ENCODE measurements at regions of chr2 and their contacts with region 1.

Region 1: DNA sequence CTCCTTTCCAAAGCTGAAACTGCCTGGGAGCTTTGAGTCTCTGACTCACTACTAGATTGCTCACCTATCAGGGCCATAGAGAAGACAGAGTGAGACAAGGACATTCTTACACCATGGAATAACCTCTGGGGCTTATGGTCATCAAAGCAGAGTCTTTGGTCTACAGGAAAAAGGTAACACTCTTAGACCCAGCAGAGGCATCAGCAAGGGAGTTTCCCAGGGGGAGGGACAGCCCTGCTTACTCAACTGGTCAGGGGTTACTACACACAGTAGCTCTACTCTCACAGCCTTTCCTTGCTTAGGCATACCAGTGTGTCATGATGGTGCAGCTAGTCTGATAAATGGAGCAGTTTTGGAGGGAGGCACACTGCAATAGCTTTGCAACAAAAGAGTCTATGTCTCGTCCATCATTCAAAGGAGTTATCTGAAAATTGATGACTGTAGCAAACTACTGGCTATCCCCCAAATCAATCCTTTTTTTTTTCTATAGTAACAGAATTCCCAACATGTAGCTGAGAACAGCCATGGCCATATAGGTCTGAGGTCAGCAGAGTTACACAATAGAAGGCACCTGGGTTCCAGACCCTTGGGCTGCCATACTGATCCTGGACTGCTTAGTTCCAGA is 22.4 kb upstream of the CD28 start:
- DNase-seq: peak; percentile 66
- ATAC-seq: peak; percentile 99
- H3K4me3 Mint-ChIP-seq: no peak overlapping the region
- H3K27ac Mint-ChIP-seq: no peak overlapping the region
- H3K4me1 Mint-ChIP-seq: peaks cover 34% of the 10 kb centered on the region
- H3K27me3 Mint-ChIP-seq: no peaks in the 10 kb centered on the region

Region 2: DNA sequence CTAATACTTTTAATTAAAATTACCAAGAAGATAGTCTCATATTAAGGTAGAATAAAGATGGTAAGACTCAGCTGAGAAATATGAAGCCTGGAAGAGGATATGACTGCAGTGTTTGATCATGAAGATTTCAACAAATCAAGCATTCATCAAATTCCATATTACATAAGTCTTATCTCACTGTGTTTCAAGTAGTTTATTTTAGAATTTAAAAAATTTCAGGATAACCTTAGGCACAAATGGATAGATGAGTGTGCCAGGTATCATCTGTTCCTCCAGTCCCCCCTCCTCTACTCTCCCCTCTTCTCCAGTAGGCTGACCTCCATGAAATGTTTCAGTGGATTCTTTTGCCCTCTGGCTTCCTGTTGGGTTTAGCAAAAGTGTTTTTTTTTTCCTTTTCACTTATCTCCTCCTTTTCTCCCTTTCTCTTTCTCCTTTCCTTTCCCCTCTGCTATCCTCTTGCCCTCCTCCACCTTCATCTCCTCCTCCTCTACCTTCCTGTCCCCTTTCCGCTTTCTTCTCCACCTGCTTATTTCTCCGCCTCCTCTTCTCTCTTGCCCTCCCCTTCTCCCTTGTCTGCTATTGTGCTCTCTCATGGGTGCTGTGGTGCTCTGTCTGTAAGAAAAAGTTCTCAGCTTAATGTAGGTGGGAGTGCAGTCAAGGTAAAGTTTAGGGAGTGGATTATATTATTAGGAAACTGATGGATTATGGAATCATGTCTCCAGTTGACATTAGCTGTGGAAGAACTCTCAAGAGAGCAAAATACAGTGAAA is 283.0 kb before region 1 on chr2:
- CTCF ChIA-PET with region 1: no interaction called
- POLR2A ChIA-PET with region 1: no interaction called
- intact Hi-C with region 1: no loop called
- DNase-seq: no peak
- ATAC-seq: no peak
- H3K4me3 Mint-ChIP-seq: no peak overlapping the region
- H3K27ac Mint-ChIP-seq: no peak overlapping the region
- H3K4me1 Mint-ChIP-seq: no peaks in the 10 kb centered on the region
- H3K27me3 Mint-ChIP-seq: no peaks in the 10 kb centered on the region

Region 3: DNA sequence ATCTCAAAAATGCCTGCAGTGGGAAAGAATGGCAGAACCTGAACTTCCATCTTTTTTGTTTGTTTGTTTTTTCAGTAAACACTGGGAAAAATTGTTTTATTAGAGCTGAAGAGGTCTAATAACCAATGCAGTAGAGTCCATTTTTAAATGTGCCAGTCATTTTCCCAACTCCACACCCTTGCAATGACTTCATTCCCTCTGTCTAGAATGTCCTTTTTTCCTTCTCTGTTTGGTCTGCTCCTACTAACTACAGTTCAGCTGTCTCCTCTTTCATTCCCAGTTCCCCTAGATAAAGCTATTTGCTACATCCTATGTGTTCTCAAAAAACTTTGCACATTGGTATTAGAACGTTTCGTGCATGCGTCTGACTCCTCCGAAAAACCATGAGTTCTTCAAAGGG is 139.6 kb before region 1 on chr2:
- CTCF ChIA-PET with region 1: no interaction called
- POLR2A ChIA-PET with region 1: interaction called, 10 read pairs
- intact Hi-C with region 1: no loop called
- DNase-seq: no peak
- ATAC-seq: no peak
- H3K4me3 Mint-ChIP-seq: no peak overlapping the region
- H3K27ac Mint-ChIP-seq: no peak overlapping the region
- H3K4me1 Mint-ChIP-seq: peaks cover 4% of the 10 kb centered on the region
- H3K27me3 Mint-ChIP-seq: no peaks in the 10 kb centered on the region

Measured in activated CD4-positive, alpha-beta T cell treated with anti-CD3 and anti-CD28 coated beads for 36 hours (primary cell).